ENCODE measurements at regions of chr11 and their contacts with region 1.

Region 1: GRCh38 chr11:114115451-114115928 is 56.0 kb downstream of the ZBTB16 start:
- DNase-seq: no peak
- ATAC-seq: no peak
- H3K4me3 ChIP-seq: no peak overlapping the region
- H3K27ac ChIP-seq: no peak overlapping the region
- H3K4me1 ChIP-seq: no peaks in the 10 kb centered on the region
- H3K27me3 ChIP-seq: peaks cover 40% of the 10 kb centered on the region
- CTCF ChIP-seq: no peak

Region 2: DNA sequence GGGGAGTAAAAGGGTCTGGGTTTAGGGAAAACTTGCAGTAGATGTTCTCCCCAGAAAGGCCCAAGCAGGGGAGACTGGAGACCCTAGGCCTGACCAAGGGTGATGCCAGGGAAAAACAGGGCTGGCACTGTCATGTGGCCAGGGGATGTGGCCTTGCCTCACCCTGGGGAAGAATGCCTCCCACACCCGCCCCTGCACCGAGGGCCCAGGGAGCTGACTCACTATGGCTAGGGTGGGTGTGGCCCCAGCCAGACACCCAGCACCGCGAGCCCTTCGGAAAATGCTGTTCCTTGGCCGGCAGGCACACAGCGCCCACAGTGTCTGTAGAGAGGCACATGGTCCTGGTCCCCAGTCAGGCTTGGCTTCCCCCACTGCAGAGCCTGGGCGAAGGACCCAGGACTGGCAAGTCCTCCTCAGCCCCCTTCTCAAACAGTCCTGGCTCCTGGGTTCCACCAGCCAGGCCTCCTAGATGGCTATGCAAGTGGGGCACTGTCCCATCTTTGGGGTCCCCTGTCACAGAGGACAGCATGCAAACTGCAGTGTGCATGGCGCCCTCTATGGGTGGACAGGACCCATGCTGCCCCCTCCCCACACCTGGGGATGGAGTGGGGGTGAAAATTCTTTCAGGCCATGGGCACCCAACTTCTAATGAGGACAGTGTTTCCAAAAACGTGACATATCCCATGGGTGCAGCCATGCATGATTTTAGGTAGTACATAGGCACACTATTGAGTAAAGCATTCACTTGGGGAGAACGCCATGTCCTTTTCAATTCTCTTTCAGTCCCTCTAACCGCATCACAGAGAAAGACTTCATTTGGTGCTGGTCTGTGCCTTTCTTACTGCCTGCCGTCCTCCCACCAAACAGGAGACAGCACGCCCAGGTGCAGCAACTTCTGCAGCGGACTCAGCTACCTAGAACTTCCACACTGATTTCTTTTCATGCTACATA is 424.6 kb before region 1 on chr11:
- CTCF ChIA-PET with region 1: no interaction called
- POLR2A ChIA-PET with region 1: no interaction called
- in situ Hi-C with region 1: no loop called
- intact Hi-C with region 1: no loop called
- DNase-seq: no peak
- ATAC-seq: peak; percentile 84
- H3K4me3 ChIP-seq: no peak overlapping the region
- H3K27ac ChIP-seq: 0 out of 2 replicates have a peak overlapping the region, but pooled peaks have one; percentile 32
- H3K4me1 ChIP-seq: no peaks in the 10 kb centered on the region
- H3K27me3 ChIP-seq: no peaks in the 10 kb centered on the region
- CTCF ChIP-seq: no peak; the same call in 1 of the 2 replicates

Region 3: DNA sequence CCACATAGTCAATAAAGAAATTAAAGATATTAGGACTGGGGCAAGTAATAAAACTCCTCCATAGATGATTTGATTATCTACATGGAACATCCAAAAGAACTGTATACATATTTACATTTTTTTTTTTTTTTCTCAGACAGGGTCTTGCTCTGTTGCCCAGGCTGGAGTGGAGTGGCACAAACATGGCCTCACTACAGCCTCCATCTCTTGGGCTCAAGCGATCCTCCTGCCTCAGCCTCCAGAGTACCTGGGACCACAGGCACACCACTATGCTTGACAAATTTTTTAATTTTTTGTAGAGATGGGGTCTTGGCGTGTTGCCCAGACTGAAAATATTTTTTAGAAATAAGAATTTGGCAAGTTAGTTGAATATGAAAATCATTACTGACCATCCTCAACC is 348.5 kb after region 1 on chr11:
- CTCF ChIA-PET with region 1: no interaction called
- POLR2A ChIA-PET with region 1: no interaction called
- in situ Hi-C with region 1: no loop called
- intact Hi-C with region 1: no loop called
- DNase-seq: no peak
- ATAC-seq: no peak
- H3K4me3 ChIP-seq: no peak overlapping the region
- H3K27ac ChIP-seq: no peak overlapping the region
- H3K4me1 ChIP-seq: no peaks in the 10 kb centered on the region
- H3K27me3 ChIP-seq: no peaks in the 10 kb centered on the region
- CTCF ChIP-seq: no peak

Region 4: GRCh38 chr11:114918286-114918685 is 802.8 kb after region 1 on chr11:
- CTCF ChIA-PET with region 1: no interaction called
- POLR2A ChIA-PET with region 1: interaction called, 11 read pairs
- in situ Hi-C with region 1: no loop called
- intact Hi-C with region 1: no loop called
- DNase-seq: no peak
- ATAC-seq: no peak
- H3K4me3 ChIP-seq: no peak overlapping the region
- H3K27ac ChIP-seq: no peak overlapping the region
- H3K4me1 ChIP-seq: no peaks in the 10 kb centered on the region
- H3K27me3 ChIP-seq: no peaks in the 10 kb centered on the region
- CTCF ChIP-seq: no peak

Measured in Panc1 (cell line).